ENCODE measurements at regions of chr13 and their contacts with region 1.

Region 1: GRCh38 chr13:56670563-56670962 is 470.2 kb upstream of the PRR20A start:
- DNase-seq: no peak
- H3K4me3 Mint-ChIP-seq: no peak overlapping the region
- H3K27ac Mint-ChIP-seq: no peak overlapping the region
- H3K4me1 Mint-ChIP-seq: no peaks in the 10 kb centered on the region
- H3K27me3 Mint-ChIP-seq: no peaks in the 10 kb centered on the region

Region 2: DNA sequence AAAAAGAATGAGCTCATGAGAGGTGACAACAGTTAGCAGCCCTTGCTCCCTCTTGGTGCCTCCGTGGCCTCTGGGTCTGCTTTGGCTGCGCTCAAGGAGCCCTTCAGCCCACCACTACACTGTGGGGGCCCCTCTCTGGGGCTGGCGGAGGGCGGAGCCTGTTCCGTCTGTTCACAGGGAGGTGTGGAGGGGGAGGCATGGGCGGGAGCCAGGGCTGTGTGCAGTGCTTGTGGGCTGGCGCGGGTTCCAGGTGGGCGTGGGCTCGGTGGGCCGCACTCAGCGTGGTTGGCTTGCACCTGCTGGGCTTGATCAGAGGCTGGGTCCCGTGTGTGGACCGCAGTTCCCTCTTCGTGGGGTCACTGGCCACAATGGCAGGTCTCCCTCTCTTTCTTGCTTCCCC is 483.2 kb before region 1 on chr13:
- intact Hi-C with region 1: loop called (anchors 10 kb)
- DNase-seq: no peak
- H3K4me3 Mint-ChIP-seq: no peak overlapping the region
- H3K27ac Mint-ChIP-seq: no peak overlapping the region
- H3K4me1 Mint-ChIP-seq: no peaks in the 10 kb centered on the region
- H3K27me3 Mint-ChIP-seq: no peaks in the 10 kb centered on the region